ENCODE measurements at regions of chr3 and their contacts with region 1.

Region 1: GRCh38 chr3:119559441-119559963 is at the start of gene CD80:
- DNase-seq: peak; percentile 84
- H3K4me3 Mint-ChIP-seq: peak within 1 kb of the TSS; percentile 24
- H3K27ac Mint-ChIP-seq: peak within 1 kb of the TSS; percentile 56
- H3K4me1 Mint-ChIP-seq: peaks cover 24% of the 10 kb centered on the region
- H3K27me3 Mint-ChIP-seq: no peaks in the 10 kb centered on the region
- total RNA-seq, gene CD80: 3.4 to 3.7 TPM

Region 2: DNA sequence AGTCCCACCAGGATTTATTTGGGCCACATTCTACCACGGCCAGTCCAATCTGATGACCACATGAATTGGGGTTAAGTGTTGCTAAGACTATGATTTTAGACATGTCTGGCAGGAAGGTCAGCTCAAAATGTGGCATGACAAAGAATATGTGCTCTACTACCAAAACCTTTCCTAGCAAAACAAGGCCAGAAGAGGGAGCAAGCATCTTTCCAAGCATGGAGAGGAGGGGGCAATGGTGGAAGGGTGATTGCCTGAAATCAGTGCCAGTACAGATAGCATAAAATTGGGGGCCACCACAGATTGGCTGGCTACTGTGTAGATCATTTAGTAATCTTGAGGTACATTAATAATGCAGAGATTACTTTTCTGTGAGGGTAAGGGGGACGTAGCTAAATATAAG is 139.3 kb before region 1 on chr3:
- CTCF ChIA-PET with region 1: no interaction called
- POLR2A ChIA-PET with region 1: no interaction called
- intact Hi-C with region 1: no loop called
- DNase-seq: no peak
- H3K4me3 Mint-ChIP-seq: no peak overlapping the region
- H3K27ac Mint-ChIP-seq: no peak overlapping the region
- H3K4me1 Mint-ChIP-seq: no peaks in the 10 kb centered on the region
- H3K27me3 Mint-ChIP-seq: no peaks in the 10 kb centered on the region

Region 3: GRCh38 chr3:119498186-119498987 is 61.1 kb before region 1 on chr3 and contains the start of gene TIMMDC1:
- CTCF ChIA-PET with region 1: interaction called, 5 read pairs
- POLR2A ChIA-PET with region 1: interaction called, 6 read pairs
- intact Hi-C with region 1: loop called (anchors 1 kb)
- DNase-seq: peak; percentile 98
- H3K4me3 Mint-ChIP-seq: peak within 1 kb of the TSS; percentile 98
- H3K27ac Mint-ChIP-seq: peak within 1 kb of the TSS; percentile 96
- H3K4me1 Mint-ChIP-seq: peaks cover 29% of the 10 kb centered on the region
- H3K27me3 Mint-ChIP-seq: no peaks in the 10 kb centered on the region
- total RNA-seq, gene TIMMDC1: 93.7 to 105 TPM

Region 4: DNA sequence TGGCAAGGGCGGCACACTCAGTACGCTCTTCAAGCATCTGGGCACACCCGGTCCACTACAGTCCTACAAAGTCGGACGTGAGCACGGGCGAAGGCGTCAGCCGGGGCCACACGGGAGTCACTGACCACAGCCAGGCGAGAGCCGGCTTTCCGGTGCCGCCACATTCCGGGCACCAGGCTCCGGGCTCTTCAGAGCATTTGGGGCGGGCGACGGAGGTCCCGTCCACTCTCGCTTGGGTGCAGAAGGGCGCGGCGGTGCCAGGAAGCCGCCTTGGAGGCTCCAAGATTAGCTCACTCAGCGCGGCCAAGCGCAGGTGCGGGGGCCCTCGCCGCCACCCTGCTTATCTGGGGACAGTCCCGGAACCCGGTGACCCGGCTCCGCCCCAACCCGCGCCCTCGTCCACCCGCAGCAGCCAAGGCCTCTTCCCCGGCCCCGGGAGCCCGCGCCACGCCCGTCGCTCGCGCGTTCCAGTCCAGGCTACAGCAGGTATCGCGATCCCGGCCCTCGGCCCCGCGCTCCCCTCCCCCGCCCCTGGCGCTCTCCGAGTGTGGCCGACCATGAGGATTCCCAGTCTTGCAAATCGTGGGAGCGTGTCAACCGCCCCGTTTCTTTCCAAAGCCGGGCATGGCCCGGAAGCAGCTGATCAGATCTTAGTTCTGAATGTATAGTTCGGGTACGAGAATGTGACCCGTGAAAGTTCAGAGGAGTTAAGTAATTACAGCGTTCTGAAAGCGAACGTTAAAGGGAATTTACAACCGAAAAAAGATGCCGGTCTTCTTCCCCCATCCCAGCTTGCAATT is 20.1 kb after region 1 on chr3 and contains the start of gene ADPRH:
- CTCF ChIA-PET with region 1: interaction called, 7 read pairs
- POLR2A ChIA-PET with region 1: interaction called, 5 read pairs
- intact Hi-C with region 1: loop called (anchors 1 kb)
- DNase-seq: peak; percentile 77
- H3K4me3 Mint-ChIP-seq: peak within 1 kb of the TSS; percentile 74
- H3K27ac Mint-ChIP-seq: peak within 1 kb of the TSS; percentile 61
- H3K4me1 Mint-ChIP-seq: peaks cover 26% of the 10 kb centered on the region
- H3K27me3 Mint-ChIP-seq: peaks cover 3% of the 10 kb centered on the region
- total RNA-seq, gene ADPRH: 7.7 to 8.6 TPM

Region 5: GRCh38 chr3:119594076-119594475 is 34.6 kb after region 1 on chr3:
- CTCF ChIA-PET with region 1: no interaction called
- POLR2A ChIA-PET with region 1: no interaction called
- intact Hi-C with region 1: no loop called
- DNase-seq: no peak
- H3K4me3 Mint-ChIP-seq: no peak overlapping the region
- H3K27ac Mint-ChIP-seq: no peak overlapping the region
- H3K4me1 Mint-ChIP-seq: peaks cover 18% of the 10 kb centered on the region
- H3K27me3 Mint-ChIP-seq: peaks cover 9% of the 10 kb centered on the region